Activated naive CD4-positive, alpha-beta T cell treated with anti-CD3 and anti-CD28 coated beads for 36 hours (primary cell): ENCODE measurements at regions of chr19 and their contacts with region 1.

Region 1: DNA sequence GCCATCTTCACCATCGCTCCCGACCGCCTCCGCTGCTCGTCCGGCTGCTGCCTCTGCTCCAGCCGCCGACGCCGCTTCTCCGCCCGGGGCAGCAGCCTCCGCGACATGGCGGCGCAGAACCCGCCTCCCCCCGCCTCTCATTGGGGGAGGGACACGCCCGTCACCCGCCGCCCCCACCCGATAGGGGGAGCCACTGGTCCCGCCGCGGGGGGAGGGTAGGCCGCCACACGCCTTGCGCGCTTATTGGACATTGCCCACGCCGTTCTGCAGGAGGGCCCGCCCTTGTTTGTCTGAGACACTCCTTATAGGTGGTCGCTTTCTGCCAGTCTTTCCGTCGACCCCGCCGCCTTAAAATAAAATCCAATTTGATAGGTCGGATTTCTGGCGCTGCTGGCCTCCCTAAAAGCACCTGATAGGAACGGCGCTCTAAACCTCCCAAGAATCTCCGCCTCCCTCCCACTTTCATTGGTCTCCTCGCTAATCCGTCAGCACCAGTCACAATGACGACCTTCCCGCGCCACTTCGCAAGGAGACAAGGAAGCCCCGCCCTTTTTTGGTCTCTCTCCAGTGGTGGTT is at the start of gene HNRNPL:
- DNase-seq: peak; percentile 100
- H3K4me3 Mint-ChIP-seq: peak within 1 kb of the TSS; percentile 91
- H3K27ac Mint-ChIP-seq: peak within 1 kb of the TSS; percentile 96
- H3K4me1 Mint-ChIP-seq: peaks cover 50% of the 10 kb centered on the region
- H3K27me3 Mint-ChIP-seq: no peaks in the 10 kb centered on the region
- total RNA-seq, gene HNRNPL: 777 to 829 TPM

Region 2: GRCh38 chr19:38263689-38264485 is 586.1 kb before region 1 on chr19:
- CTCF ChIA-PET with region 1: no interaction called
- intact Hi-C with region 1: loop called (anchors 5 kb)
- DNase-seq: peak; percentile 86
- H3K4me3 Mint-ChIP-seq: peak overlapping the region; percentile 80
- H3K27ac Mint-ChIP-seq: peak overlapping the region; percentile 90
- H3K4me1 Mint-ChIP-seq: peaks cover 34% of the 10 kb centered on the region
- H3K27me3 Mint-ChIP-seq: peaks cover 3% of the 10 kb centered on the region

Region 3: GRCh38 chr19:38647368-38647965 is 202.5 kb before region 1 on chr19 and contains the start of gene ACTN4:
- CTCF ChIA-PET with region 1: no interaction called
- intact Hi-C with region 1: loop called (anchors 1 kb)
- DNase-seq: peak; percentile 99
- H3K4me3 Mint-ChIP-seq: peak within 1 kb of the TSS; percentile 96
- H3K27ac Mint-ChIP-seq: peak within 1 kb of the TSS; percentile 30
- H3K4me1 Mint-ChIP-seq: peaks cover 30% of the 10 kb centered on the region
- H3K27me3 Mint-ChIP-seq: peaks cover 29% of the 10 kb centered on the region
- total RNA-seq, gene ACTN4: 117 to 119 TPM

Region 4: GRCh38 chr19:38838573-38839269 is 11.2 kb before region 1 on chr19:
- CTCF ChIA-PET with region 1: interaction called, 4 read pairs
- intact Hi-C with region 1: loop called (anchors 1 kb)
- DNase-seq: peak; percentile 94
- H3K4me3 Mint-ChIP-seq: peak overlapping the region; percentile 37
- H3K27ac Mint-ChIP-seq: peak overlapping the region; percentile 89
- H3K4me1 Mint-ChIP-seq: peaks cover 63% of the 10 kb centered on the region
- H3K27me3 Mint-ChIP-seq: no peaks in the 10 kb centered on the region

Region 5: GRCh38 chr19:38899447-38900219 is 49.7 kb after region 1 on chr19 and contains the starts of genes NFKBIB and SIRT2:
- CTCF ChIA-PET with region 1: no interaction called
- intact Hi-C with region 1: loop called (anchors 1 kb)
- DNase-seq: peak; percentile 100
- H3K4me3 Mint-ChIP-seq: peak within 1 kb of the TSS; percentile 96
- H3K27ac Mint-ChIP-seq: peak within 1 kb of the TSS; percentile 86
- H3K4me1 Mint-ChIP-seq: peaks cover 41% of the 10 kb centered on the region
- H3K27me3 Mint-ChIP-seq: no peaks in the 10 kb centered on the region
- total RNA-seq, gene NFKBIB: 47.2 to 52.7 TPM
- total RNA-seq, gene SIRT2: 18.2 to 19.6 TPM

Region 6: DNA sequence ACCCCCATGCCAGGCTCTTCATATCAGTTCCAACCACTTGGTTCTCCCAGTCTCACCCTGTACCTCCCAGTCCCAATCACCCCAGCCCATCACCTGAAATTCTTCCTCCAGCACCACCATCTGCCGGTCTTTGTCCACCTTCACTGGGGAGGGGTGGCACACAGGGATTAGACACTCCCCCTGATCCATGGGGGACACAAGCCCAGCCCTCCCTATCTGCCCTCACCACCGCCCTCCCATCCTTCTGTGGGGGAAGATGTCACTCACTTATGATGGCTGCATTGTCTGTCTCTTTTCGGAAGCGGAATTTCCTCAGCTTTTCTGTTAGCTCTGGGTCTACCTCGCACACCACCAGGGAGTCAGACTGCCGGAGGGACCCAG is 485.2 kb after region 1 on chr19:
- CTCF ChIA-PET with region 1: no interaction called
- intact Hi-C with region 1: loop called (anchors 5 kb)
- DNase-seq: peak; percentile 57
- H3K4me3 Mint-ChIP-seq: peak overlapping the region; percentile 95
- H3K27ac Mint-ChIP-seq: peak overlapping the region; percentile 99
- H3K4me1 Mint-ChIP-seq: peaks cover 65% of the 10 kb centered on the region
- H3K27me3 Mint-ChIP-seq: no peaks in the 10 kb centered on the region